Right ventricle myocardium inferior (tissue), 1 donor: ENCODE measurements at regions of chr1 and their contacts with region 1.

Region 1: GRCh38 chr1:203558064-203558760 is 64.3 kb downstream of the OPTC start:
- DNase-seq: no peak
- ATAC-seq: peak; percentile 59

Region 2: DNA sequence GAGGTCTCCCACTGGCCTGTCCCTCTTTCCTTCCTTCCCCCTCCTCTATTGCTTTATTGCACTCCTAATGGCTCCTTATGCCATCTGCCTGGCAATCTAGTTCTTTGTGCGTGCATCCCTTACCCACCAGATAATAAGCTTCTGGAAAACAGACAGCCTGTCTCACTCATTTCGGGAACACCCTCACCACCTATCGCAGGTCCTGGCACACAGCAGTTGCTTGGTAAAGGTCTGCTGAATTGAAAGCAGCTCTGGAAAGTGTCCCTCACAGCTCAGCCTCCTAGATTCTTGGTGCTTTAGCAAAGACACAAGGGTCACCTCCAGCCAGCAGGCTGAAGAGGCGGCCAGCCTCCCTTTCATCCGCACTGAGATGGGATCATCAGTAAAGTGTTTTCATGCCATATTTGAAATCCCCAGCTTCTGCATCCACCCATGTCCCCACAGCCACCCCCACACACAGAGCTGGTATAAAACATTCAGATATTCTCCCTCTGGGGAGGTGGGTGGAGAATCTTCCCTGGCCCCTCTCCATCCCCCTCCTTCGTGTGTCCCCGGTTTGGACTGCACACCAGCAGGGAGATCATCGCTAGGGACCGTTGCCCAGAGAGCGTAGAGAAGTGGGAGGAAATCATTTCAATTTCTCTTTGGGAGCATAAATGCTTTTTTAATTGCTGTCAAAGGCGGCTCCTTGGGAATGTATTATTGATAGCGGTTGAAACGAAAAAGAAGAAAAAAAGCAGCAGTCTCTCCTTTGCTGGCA is 39.3 kb after region 1 on chr1:
- intact Hi-C with region 1: loop called (anchors 1 kb)
- DNase-seq: no peak
- ATAC-seq: peak; percentile 80